ENCODE measurements at regions of chr11 and their contacts with region 1.

Region 1: GRCh38 chr11:59753650-59754493 is 1.3 kb upstream of the STX3 start:
- DNase-seq: peak; percentile 90
- H3K4me3 Mint-ChIP-seq: peak overlapping the region; percentile 94
- H3K27ac Mint-ChIP-seq: peak overlapping the region; percentile 48
- H3K4me1 Mint-ChIP-seq: peaks cover 9% of the 10 kb centered on the region
- H3K27me3 Mint-ChIP-seq: peaks cover 4% of the 10 kb centered on the region

Region 2: GRCh38 chr11:59437770-59438169 is 316.1 kb before region 1 on chr11:
- CTCF ChIA-PET with region 1: no interaction called
- intact Hi-C with region 1: no loop called
- DNase-seq: no peak
- H3K4me3 Mint-ChIP-seq: no peak overlapping the region
- H3K27ac Mint-ChIP-seq: no peak overlapping the region
- H3K4me1 Mint-ChIP-seq: no peaks in the 10 kb centered on the region
- H3K27me3 Mint-ChIP-seq: no peaks in the 10 kb centered on the region

Region 3: GRCh38 chr11:59542142-59542810 is 211.6 kb before region 1 on chr11:
- CTCF ChIA-PET with region 1: interaction called, 3 read pairs
- intact Hi-C with region 1: loop called (anchors 1 kb)
- DNase-seq: no peak
- H3K4me3 Mint-ChIP-seq: no peak overlapping the region
- H3K27ac Mint-ChIP-seq: no peak overlapping the region
- H3K4me1 Mint-ChIP-seq: peaks cover 11% of the 10 kb centered on the region
- H3K27me3 Mint-ChIP-seq: no peaks in the 10 kb centered on the region

Region 4: DNA sequence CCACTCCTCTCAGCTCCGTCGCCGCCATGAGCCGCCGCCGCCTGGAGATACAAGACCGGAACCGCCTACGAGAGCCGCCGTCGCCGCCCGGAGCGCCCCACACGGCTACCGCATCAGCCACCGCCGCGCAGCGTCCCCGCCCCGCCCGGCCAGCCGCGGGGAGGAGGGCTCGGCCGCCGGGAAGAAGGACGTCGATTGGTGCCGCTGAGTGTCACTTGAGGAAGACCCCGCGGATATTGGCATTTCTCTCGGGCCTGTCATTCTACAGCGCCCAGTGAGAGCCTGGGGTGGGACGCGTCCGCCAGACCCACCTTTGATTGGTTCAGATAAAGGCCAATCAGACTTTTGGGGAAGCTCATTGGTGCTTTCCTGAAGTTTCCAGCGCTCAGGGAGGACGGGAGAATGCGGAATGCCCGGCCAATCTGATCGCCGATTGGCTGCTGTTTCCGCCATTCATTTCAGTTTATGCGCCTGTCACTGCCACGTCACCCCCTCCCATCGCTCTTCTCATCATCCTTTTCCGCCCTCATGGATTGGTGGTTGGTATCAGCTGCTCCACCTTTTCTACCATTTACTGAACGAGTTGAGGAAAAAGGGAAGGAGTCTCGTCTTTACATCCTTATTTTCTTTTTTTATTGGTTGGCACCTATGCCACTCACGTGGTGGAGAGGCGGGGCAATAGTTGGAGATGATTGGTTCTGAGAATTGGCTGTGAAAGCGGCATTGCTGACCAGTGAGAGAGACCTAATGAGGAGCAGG is 138.1 kb before region 1 on chr11 and contains the start of gene OSBP:
- CTCF ChIA-PET with region 1: no interaction called
- intact Hi-C with region 1: loop called (anchors 1 kb)
- DNase-seq: peak; percentile 99
- H3K4me3 Mint-ChIP-seq: peak within 1 kb of the TSS; percentile 81
- H3K27ac Mint-ChIP-seq: peak within 1 kb of the TSS; percentile 86
- H3K4me1 Mint-ChIP-seq: peaks cover 35% of the 10 kb centered on the region
- H3K27me3 Mint-ChIP-seq: no peaks in the 10 kb centered on the region
- total RNA-seq, gene OSBP: 33.9 to 37.0 TPM

Region 5: GRCh38 chr11:59770319-59770718 is 16.4 kb after region 1 on chr11:
- CTCF ChIA-PET with region 1: interaction called, 25 read pairs
- intact Hi-C with region 1: loop called (anchors 1 kb)
- DNase-seq: no peak
- H3K4me3 Mint-ChIP-seq: no peak overlapping the region
- H3K27ac Mint-ChIP-seq: no peak overlapping the region
- H3K4me1 Mint-ChIP-seq: peaks cover 27% of the 10 kb centered on the region
- H3K27me3 Mint-ChIP-seq: no peaks in the 10 kb centered on the region

Region 6: GRCh38 chr11:59810189-59810910 is 56.5 kb after region 1 on chr11 and contains the start of gene MRPL16:
- CTCF ChIA-PET with region 1: interaction called, 15 read pairs
- intact Hi-C with region 1: loop called (anchors 1 kb)
- DNase-seq: peak; percentile 92
- H3K4me3 Mint-ChIP-seq: peak within 1 kb of the TSS; percentile 87
- H3K27ac Mint-ChIP-seq: peak within 1 kb of the TSS; percentile 82
- H3K4me1 Mint-ChIP-seq: peaks cover 18% of the 10 kb centered on the region
- H3K27me3 Mint-ChIP-seq: no peaks in the 10 kb centered on the region
- total RNA-seq, gene MRPL16: 59.5 to 63.2 TPM

Region 7: GRCh38 chr11:60130496-60130895 is 376.6 kb after region 1 on chr11:
- CTCF ChIA-PET with region 1: no interaction called
- intact Hi-C with region 1: loop called (anchors 1 kb)
- DNase-seq: peak; percentile 39
- H3K4me3 Mint-ChIP-seq: no peak overlapping the region
- H3K27ac Mint-ChIP-seq: no peak overlapping the region
- H3K4me1 Mint-ChIP-seq: no peaks in the 10 kb centered on the region
- H3K27me3 Mint-ChIP-seq: peaks cover 9% of the 10 kb centered on the region

Region 8: GRCh38 chr11:61361686-61362541 is 1608.0 kb after region 1 on chr11 and contains the starts of genes CYB561A3 and TMEM138:
- CTCF ChIA-PET with region 1: no interaction called
- intact Hi-C with region 1: loop called (anchors 10 kb)
- DNase-seq: peak; percentile 94
- H3K4me3 Mint-ChIP-seq: peak within 1 kb of the TSS; percentile 100
- H3K27ac Mint-ChIP-seq: peak within 1 kb of the TSS; percentile 96
- H3K4me1 Mint-ChIP-seq: peaks cover 42% of the 10 kb centered on the region
- H3K27me3 Mint-ChIP-seq: no peaks in the 10 kb centered on the region
- total RNA-seq, gene CYB561A3: 31.7 to 31.8 TPM
- total RNA-seq, gene TMEM138: 35.6 to 41.4 TPM